Heart left ventricle (tissue), 16 donors: ENCODE measurements at regions of chr1 and their contacts with region 1.

Region 1: DNA sequence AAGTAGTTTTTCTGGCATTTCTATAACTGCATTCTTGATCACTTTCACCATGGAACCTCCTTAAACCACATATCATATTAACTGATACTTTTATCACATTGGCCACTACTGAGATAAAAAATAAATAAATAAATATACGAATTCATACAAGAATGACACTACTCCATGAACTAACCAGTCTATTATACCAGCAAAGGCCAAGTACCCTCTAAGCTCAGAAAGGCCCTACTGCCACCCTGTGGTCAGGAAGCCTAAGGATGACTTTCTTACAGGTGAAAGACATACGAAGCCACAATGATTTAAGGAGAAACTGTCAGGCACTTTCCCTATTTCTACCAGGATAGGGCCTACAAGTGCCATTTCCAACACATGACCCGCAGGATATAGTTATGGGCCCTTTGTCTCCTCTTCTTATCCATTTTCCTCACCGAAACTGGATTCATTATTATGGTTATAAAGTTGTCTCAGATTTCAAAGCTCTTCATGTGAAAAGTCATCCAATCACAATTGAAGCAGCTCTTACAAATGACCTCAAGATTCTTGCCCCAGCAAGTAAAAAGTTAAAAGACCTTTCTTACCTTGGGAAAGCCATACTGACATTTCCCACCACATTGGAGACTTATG is 23.9 kb downstream of the DNAJC8 start:
- DNase-seq: peak in 4 of 5 donors; percentile 37 to 60 (median 49)
- ATAC-seq: peak; percentile 78 to 83 (median 82)
- H3K4me3 ChIP-seq: no peak overlapping the region
- H3K27ac ChIP-seq: no peak overlapping the region
- H3K4me1 ChIP-seq: peaks cover 0 to 3% (median 0%) of the 10 kb centered on the region in 12 donors
- H3K27me3 ChIP-seq: no peaks in the 10 kb centered on the region
- CTCF ChIP-seq: peak; percentile 53 to 79 (median 68)
- POLR2A ChIP-seq: no peak

Region 2: DNA sequence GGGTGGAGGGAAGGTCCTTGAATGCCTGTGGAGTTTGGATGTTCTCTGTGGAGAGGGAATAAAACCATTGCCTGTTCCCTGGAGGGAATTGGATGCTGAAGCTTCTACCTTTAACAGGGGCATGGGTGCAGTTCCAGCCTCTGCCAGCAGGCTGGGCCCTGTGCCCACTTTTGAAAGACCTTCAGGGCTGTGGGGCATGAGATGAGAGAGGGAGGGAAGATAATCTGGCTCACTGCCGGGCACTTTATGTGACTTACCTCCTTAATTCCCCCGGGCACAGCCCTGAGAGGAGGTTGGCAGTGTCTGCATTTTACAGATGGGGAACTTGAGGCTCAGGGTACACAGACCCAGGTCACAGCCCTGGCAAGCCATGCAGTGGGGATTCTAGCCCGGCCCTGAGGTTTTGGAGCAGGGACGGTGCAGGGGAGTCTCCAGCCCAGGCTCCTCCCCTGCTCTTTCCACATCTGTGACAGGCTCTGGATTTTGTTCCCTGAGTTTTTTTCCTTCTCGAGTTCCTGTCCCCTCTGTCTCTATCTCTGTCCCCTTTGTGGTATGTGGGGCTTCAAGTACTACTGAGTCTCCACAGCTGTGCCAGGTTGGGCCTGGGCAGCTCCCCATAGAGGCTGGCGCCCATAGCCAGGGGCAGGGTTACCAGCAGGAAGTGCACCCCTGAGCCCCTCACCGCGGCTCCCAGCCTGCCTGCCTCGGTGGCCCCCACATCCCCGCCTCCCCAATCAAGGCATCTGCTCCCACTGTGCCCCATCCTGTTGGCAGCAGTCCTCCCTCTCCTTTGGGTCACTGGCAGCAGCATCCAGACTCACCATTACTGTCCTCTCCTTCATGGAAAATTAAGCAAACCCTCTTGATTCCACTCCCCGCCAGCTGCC is 350.6 kb before region 1 on chr1:
- intact Hi-C with region 1: loop called in 4 of 10 experiments (anchors 5 to 10 kb)
- DNase-seq: peak; percentile 75 to 89 (median 81)
- ATAC-seq: peak; percentile 79 to 94 (median 91)
- H3K4me3 ChIP-seq: peak overlapping the region in 1 of 12 donors; percentile 29
- H3K27ac ChIP-seq: peak overlapping the region in 1 of 12 donors; percentile 75
- H3K4me1 ChIP-seq: peaks cover 0 to 35% (median 3%) of the 10 kb centered on the region in 12 donors
- H3K27me3 ChIP-seq: no peaks in the 10 kb centered on the region
- CTCF ChIP-seq: peak; percentile 77 to 96 (median 88)
- POLR2A ChIP-seq: no peak

Region 3: GRCh38 chr1:27940297-27940696 is 268.6 kb before region 1 on chr1:
- intact Hi-C with region 1: loop called in 1 of 10 experiments (anchors 5 kb)
- DNase-seq: peak in 3 of 5 donors; percentile 48 to 63 (median 48)
- ATAC-seq: peak in 3 of 4 donors; percentile 45 to 52 (median 51)
- H3K4me3 ChIP-seq: no peak overlapping the region
- H3K27ac ChIP-seq: no peak overlapping the region
- H3K4me1 ChIP-seq: peaks cover 0 to 22% (median 0%) of the 10 kb centered on the region in 12 donors
- H3K27me3 ChIP-seq: peaks cover 0 to 12% (median under 1%) of the 10 kb centered on the region in 9 donors
- CTCF ChIP-seq: peak in 9 of 12 donors; percentile 18 to 43 (median 31)
- POLR2A ChIP-seq: no peak

Region 4: GRCh38 chr1:28036431-28036830 is 172.5 kb before region 1 on chr1:
- intact Hi-C with region 1: loop called in 2 of 10 experiments (anchors 2 to 5 kb)
- DNase-seq: no peak
- ATAC-seq: peak in 1 of 4 donors; percentile 34
- H3K4me3 ChIP-seq: no peak overlapping the region
- H3K27ac ChIP-seq: no peak overlapping the region
- H3K4me1 ChIP-seq: peaks cover 0 to 5% (median under 1%) of the 10 kb centered on the region in 12 donors
- H3K27me3 ChIP-seq: no peaks in the 10 kb centered on the region
- CTCF ChIP-seq: peak in 6 of 12 donors; percentile 12 to 32 (median 20)
- POLR2A ChIP-seq: no peak

Region 5: GRCh38 chr1:28091043-28091781 is 117.7 kb before region 1 on chr1:
- intact Hi-C with region 1: loop called (anchors 1 to 5 kb)
- DNase-seq: peak; percentile 34 to 71 (median 62)
- ATAC-seq: no peak
- H3K4me3 ChIP-seq: no peak overlapping the region
- H3K27ac ChIP-seq: peak overlapping the region in 1 of 12 donors; percentile 48
- H3K4me1 ChIP-seq: peaks cover 0 to 31% (median 17%) of the 10 kb centered on the region in 12 donors
- H3K27me3 ChIP-seq: no peaks in the 10 kb centered on the region
- CTCF ChIP-seq: peak; percentile 40 to 83 (median 74)
- POLR2A ChIP-seq: no peak

Region 6: DNA sequence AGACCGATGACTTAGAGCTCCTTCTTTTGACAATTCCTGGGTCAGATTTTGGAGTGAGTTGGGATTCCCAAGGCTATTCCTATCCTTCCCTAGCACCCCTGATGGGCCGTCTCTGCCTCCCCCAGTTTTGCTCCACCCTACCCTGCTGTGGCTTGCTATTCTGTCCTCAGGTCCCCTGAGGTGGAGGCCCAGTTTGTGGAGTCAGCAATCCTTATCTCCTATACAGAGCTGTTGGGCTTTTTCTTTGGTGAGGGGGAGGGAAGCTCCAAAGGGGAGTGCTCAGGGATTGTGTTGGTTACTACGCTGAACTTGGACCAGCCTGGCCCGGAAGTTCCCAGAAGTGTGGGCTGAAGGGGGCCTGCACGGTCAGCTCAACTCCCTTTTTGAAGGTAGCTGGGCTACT is 58.0 kb after region 1 on chr1:
- intact Hi-C with region 1: no loop called
- DNase-seq: no peak
- ATAC-seq: peak in 3 of 4 donors; percentile 24 to 45 (median 35)
- H3K4me3 ChIP-seq: no peak overlapping the region
- H3K27ac ChIP-seq: no peak overlapping the region
- H3K4me1 ChIP-seq: peaks cover 0 to 44% (median 18%) of the 10 kb centered on the region in 12 donors
- H3K27me3 ChIP-seq: no peaks in the 10 kb centered on the region
- CTCF ChIP-seq: no peak
- POLR2A ChIP-seq: no peak

Region 7: GRCh38 chr1:28359592-28360239 is 150.8 kb after region 1 on chr1:
- intact Hi-C with region 1: no loop called
- DNase-seq: peak; percentile 43 to 74 (median 64)
- ATAC-seq: peak in 2 of 4 donors; percentile 45 to 59
- H3K4me3 ChIP-seq: no peak overlapping the region
- H3K27ac ChIP-seq: no peak overlapping the region
- H3K4me1 ChIP-seq: peaks cover 0 to 2% (median 0%) of the 10 kb centered on the region in 12 donors
- H3K27me3 ChIP-seq: no peaks in the 10 kb centered on the region
- CTCF ChIP-seq: peak; percentile 52 to 78 (median 62)
- POLR2A ChIP-seq: no peak

Region 8: GRCh38 chr1:28526889-28527288 is 318.0 kb after region 1 on chr1:
- intact Hi-C with region 1: no loop called
- DNase-seq: no peak
- ATAC-seq: no peak
- H3K4me3 ChIP-seq: no peak overlapping the region
- H3K27ac ChIP-seq: no peak overlapping the region
- H3K4me1 ChIP-seq: no peaks in the 10 kb centered on the region
- H3K27me3 ChIP-seq: no peaks in the 10 kb centered on the region
- CTCF ChIP-seq: no peak
- POLR2A ChIP-seq: no peak